Right cardiac atrium (tissue), 5 donors: ENCODE measurements at regions of chrX and their contacts with region 1.

Region 1: DNA sequence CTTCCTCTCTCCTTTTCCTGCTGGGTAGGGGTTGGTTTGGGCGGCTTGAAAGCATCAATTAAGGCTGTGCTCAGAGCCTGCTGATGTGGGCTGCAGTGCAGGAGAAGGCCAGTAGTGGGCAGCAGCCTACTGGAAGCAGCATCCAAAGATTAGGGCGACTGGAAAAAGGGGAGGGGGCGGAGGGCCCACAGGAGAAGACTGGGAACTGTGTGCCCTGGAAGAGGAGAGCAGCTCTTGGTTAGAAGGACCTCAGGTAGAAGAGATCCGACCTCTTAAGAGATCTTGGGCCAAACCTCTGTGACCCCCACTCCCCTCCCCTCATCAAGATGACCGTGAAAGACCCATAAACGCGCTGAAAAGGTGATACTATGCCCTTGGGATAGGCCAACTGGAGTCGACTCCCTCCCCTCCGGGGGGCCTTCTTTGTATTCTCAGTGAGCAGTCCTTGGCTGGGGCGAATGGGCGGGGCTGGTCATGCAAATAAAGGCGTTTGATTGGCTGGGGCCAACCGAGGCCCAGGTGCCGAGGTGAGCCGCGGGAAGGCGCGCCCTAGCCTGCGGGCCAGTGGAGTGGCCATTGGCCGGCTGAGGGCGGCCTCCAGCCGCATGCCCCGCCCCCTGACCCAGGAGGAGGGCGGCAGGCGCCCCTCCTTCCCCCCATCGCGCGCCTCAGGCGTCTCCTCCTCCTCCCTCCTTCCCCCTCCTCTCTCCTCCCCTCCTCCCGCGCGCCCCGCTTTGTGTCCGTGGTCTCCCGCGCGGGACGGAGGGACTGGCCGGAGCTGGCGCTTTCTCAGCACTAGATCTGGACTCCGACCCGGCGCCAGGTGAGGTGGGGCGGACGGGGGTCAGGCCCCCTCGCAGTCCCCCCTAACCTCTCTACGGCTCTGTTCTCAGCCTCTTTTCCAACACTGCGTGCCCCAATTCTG is 10.1 kb downstream of the DLG3 start:
- DNase-seq: peak; percentile 63 to 90 (median 88)
- ATAC-seq: peak; percentile 92 to 94
- H3K4me3 ChIP-seq: peak overlapping the region; percentile 58
- H3K27ac ChIP-seq: peak overlapping the region; percentile 60
- H3K4me1 ChIP-seq: no peaks in the 10 kb centered on the region
- H3K27me3 ChIP-seq: no peaks in the 10 kb centered on the region

Region 2: DNA sequence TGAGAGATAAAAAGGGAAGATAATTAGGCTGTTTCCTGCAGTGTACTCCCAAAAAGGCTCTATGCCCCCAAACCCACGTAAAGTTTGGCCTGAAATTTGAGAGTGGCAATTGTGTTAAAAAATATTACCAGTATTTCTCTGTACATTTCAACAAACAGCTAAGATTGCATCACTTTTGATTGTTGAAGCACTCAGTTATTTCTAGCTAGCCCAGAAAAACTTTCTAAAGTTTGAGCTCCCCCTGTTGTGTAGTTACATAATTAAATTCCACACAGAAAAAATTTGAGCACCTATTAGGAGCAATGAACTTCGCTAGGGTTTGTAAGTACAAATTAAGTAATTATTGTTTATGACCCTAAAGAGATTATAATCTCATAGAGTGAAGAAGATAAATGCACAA is 99.4 kb after region 1 on chrX:
- intact Hi-C with region 1: loop called in 3 of 4 experiments (anchors 5 to 10 kb)
- DNase-seq: no peak
- ATAC-seq: no peak
- H3K4me3 ChIP-seq: no peak overlapping the region
- H3K27ac ChIP-seq: no peak overlapping the region
- H3K4me1 ChIP-seq: no peaks in the 10 kb centered on the region
- H3K27me3 ChIP-seq: no peaks in the 10 kb centered on the region

Region 3: DNA sequence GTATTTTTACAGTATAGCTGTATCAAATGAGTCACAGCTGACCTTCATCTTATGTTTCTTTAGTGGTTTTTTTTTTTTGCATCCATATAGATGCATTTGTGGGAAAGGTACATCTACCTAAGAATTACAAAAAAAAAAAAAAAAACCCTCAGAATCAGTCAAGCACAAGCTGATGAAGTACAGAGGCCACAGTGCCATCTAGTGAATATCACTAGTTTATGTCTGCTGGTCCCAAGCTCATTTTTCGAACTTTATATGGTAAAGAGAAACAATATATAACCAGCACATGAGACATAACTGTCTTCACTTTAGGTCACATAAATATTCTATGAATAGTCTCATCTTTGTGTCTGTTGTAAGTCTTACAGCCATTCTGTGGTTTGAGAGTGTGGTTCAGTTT is 210.0 kb after region 1 on chrX:
- intact Hi-C with region 1: loop called in 1 of 4 experiments (anchors 10 kb)
- DNase-seq: no peak
- ATAC-seq: no peak
- H3K4me3 ChIP-seq: no peak overlapping the region
- H3K27ac ChIP-seq: no peak overlapping the region
- H3K4me1 ChIP-seq: no peaks in the 10 kb centered on the region
- H3K27me3 ChIP-seq: no peaks in the 10 kb centered on the region